ENCODE measurements at regions of chr6 and their contacts with region 1.

Region 1: GRCh38 chr6:132669690-132670291 is 10.8 kb upstream of the TAAR1 start:
- DNase-seq: peak; percentile 54
- ATAC-seq: peak; percentile 87
- H3K4me3 ChIP-seq: no peak overlapping the region
- H3K27ac ChIP-seq: no peak overlapping the region; the same call in 1 of the 2 replicates
- H3K4me1 ChIP-seq: peaks cover 2% of the 10 kb centered on the region
- H3K27me3 ChIP-seq: peaks cover 3% of the 10 kb centered on the region; the same call in 1 of the 2 replicates
- CTCF ChIP-seq: peak; percentile 68
- POLR2A ChIP-seq: no peak
- RAD21 ChIP-seq: peak; percentile 70

Region 2: DNA sequence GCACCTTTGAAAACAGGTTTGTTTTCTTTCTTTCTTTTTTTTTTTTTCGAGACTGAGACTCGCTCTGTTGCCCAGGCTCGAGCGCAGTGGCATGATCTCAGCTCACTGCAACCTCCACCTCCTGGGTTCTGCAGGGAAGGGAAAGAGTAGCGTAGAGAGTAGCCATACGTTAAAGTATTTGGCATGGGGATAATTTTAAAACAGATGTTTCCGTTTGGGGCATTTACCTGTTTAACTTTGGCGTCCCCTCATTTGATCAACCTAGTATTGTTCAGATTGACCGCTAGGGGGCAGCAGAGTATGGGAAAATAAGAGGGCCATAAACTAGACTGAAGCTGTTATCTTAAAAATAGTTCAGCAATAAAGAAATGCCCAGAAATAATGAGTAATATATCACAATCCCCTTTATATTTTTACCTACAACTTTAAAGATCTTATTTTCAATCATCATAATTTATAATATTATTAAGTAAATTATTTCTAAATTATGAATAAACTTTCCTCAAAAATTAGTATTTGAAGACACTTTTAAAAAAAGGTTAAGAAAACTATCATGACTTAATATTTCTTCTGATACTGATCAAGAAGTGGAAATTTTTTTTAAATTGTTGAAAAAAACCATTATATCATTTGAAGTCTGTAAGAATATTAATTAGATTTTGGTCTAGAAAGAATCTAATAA is 139.4 kb before region 1 on chr6:
- CTCF ChIA-PET with region 1: interaction called, 4 read pairs
- POLR2A ChIA-PET with region 1: no interaction called
- dilution Hi-C with region 1: no loop called
- in situ Hi-C with region 1: no loop called
- intact Hi-C with region 1: loop called (anchors 2 kb)
- DNase-seq: peak; percentile 69
- ATAC-seq: peak; percentile 83
- H3K4me3 ChIP-seq: no peak overlapping the region
- H3K27ac ChIP-seq: no peak overlapping the region
- H3K4me1 ChIP-seq: no peaks in the 10 kb centered on the region
- H3K27me3 ChIP-seq: peaks cover 17% of the 10 kb centered on the region
- CTCF ChIP-seq: peak; percentile 73
- POLR2A ChIP-seq: no peak
- RAD21 ChIP-seq: peak; percentile 70

Region 3: GRCh38 chr6:132708776-132709175 is 39.0 kb after region 1 on chr6:
- CTCF ChIA-PET with region 1: no interaction called
- POLR2A ChIA-PET with region 1: no interaction called
- dilution Hi-C with region 1: no loop called
- in situ Hi-C with region 1: no loop called
- intact Hi-C with region 1: no loop called
- DNase-seq: peak; percentile 10
- ATAC-seq: 0 out of 2 replicates have a peak, but pooled peaks have one; percentile 27
- H3K4me3 ChIP-seq: no peak overlapping the region
- H3K27ac ChIP-seq: no peak overlapping the region
- H3K4me1 ChIP-seq: 0 out of 2 replicates have a peak, but pooled peaks cover 4% of the 10 kb centered on the region
- H3K27me3 ChIP-seq: no peaks in the 10 kb centered on the region
- CTCF ChIP-seq: no peak
- POLR2A ChIP-seq: no peak
- RAD21 ChIP-seq: no peak

Region 4: GRCh38 chr6:132734694-132735635 is 65.2 kb after region 1 on chr6:
- CTCF ChIA-PET with region 1: interaction called, 3 read pairs
- POLR2A ChIA-PET with region 1: no interaction called
- dilution Hi-C with region 1: no loop called
- in situ Hi-C with region 1: no loop called
- intact Hi-C with region 1: loop called (anchors 5 kb)
- DNase-seq: peak; percentile 83
- ATAC-seq: peak; percentile 60
- H3K4me3 ChIP-seq: no peak overlapping the region
- H3K27ac ChIP-seq: peak overlapping the region; percentile 68; the same call in 1 of the 2 replicates
- H3K4me1 ChIP-seq: peaks cover 14% of the 10 kb centered on the region
- H3K27me3 ChIP-seq: no peaks in the 10 kb centered on the region
- CTCF ChIP-seq: peak; percentile 37
- POLR2A ChIP-seq: no peak
- RAD21 ChIP-seq: peak; percentile 25; the same call in 1 of the 2 replicates

Region 5: DNA sequence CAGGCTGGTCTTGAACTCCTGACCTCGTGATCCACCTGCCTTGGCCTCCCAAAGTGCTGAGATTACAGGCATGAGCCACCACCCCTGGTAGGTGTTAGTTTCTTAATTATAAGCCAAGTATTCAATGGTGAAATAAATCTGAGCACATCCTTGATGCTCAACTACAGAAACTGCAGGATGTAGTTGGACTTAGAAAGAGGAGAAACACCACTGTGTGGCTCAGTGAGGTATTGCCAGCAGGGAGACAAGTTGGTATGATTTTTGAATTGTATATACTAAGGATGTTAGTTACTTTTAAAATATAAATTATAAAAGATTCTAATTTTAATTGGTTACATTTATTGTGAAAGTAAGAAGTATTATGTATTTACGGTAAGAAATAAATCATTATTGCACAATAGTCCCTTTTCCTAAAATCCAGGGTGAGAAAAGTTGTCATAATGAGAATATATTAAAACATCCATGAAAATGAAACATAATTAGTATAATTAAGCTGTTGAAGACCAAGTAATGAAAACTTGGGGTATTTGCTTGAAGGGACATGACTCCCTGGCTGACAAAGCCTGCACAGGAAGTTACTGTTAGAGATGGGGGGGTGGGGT is 111.1 kb after region 1 on chr6:
- CTCF ChIA-PET with region 1: no interaction called
- POLR2A ChIA-PET with region 1: no interaction called
- dilution Hi-C with region 1: no loop called
- in situ Hi-C with region 1: no loop called
- intact Hi-C with region 1: loop called (anchors 1 kb)
- DNase-seq: peak; percentile 63
- ATAC-seq: peak; percentile 81
- H3K4me3 ChIP-seq: no peak overlapping the region
- H3K27ac ChIP-seq: no peak overlapping the region
- H3K4me1 ChIP-seq: no peaks in the 10 kb centered on the region
- H3K27me3 ChIP-seq: no peaks in the 10 kb centered on the region
- CTCF ChIP-seq: peak; percentile 62
- POLR2A ChIP-seq: no peak
- RAD21 ChIP-seq: peak; percentile 59

Region 6: GRCh38 chr6:132813173-132813856 is 143.5 kb after region 1 on chr6:
- CTCF ChIA-PET with region 1: no interaction called
- POLR2A ChIA-PET with region 1: interaction called, 9 read pairs
- dilution Hi-C with region 1: no loop called
- in situ Hi-C with region 1: no loop called
- intact Hi-C with region 1: loop called (anchors 2 kb)
- DNase-seq: no peak
- ATAC-seq: peak; percentile 6
- H3K4me3 ChIP-seq: peak overlapping the region; percentile 73
- H3K27ac ChIP-seq: peak overlapping the region; percentile 95
- H3K4me1 ChIP-seq: peaks cover 2% of the 10 kb centered on the region
- H3K27me3 ChIP-seq: no peaks in the 10 kb centered on the region; the same call in 1 of the 2 replicates
- CTCF ChIP-seq: no peak
- POLR2A ChIP-seq: no peak
- RAD21 ChIP-seq: no peak

Region 7: DNA sequence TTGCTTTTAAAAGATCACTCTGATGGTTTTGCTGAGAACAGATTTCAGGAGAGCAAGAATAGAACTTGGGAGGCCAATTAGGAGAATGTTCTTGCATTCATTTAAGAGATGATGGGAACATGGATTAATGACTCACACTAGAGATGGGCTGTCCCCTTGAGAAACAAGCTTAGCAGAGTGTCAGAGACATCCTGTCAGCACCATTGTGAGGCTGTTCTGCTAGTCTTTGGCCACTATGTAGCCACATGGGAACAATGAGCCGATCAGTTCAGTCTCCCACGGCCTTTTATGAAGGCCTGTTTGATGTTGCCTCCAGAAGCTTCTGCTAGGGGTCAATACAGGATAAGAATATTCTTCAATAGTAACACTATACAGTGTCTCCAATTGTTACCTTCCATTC is 458.4 kb after region 1 on chr6:
- CTCF ChIA-PET with region 1: no interaction called
- POLR2A ChIA-PET with region 1: no interaction called
- dilution Hi-C with region 1: no loop called
- in situ Hi-C with region 1: no loop called
- intact Hi-C with region 1: no loop called
- DNase-seq: peak; percentile 28
- ATAC-seq: no peak
- H3K4me3 ChIP-seq: no peak overlapping the region
- H3K27ac ChIP-seq: no peak overlapping the region
- H3K4me1 ChIP-seq: peaks cover 20% of the 10 kb centered on the region
- H3K27me3 ChIP-seq: no peaks in the 10 kb centered on the region
- CTCF ChIP-seq: no peak
- POLR2A ChIP-seq: no peak
- RAD21 ChIP-seq: no peak